Calu3 (cell line): ENCODE measurements at regions of chrX and their contacts with region 1.

Region 1: DNA sequence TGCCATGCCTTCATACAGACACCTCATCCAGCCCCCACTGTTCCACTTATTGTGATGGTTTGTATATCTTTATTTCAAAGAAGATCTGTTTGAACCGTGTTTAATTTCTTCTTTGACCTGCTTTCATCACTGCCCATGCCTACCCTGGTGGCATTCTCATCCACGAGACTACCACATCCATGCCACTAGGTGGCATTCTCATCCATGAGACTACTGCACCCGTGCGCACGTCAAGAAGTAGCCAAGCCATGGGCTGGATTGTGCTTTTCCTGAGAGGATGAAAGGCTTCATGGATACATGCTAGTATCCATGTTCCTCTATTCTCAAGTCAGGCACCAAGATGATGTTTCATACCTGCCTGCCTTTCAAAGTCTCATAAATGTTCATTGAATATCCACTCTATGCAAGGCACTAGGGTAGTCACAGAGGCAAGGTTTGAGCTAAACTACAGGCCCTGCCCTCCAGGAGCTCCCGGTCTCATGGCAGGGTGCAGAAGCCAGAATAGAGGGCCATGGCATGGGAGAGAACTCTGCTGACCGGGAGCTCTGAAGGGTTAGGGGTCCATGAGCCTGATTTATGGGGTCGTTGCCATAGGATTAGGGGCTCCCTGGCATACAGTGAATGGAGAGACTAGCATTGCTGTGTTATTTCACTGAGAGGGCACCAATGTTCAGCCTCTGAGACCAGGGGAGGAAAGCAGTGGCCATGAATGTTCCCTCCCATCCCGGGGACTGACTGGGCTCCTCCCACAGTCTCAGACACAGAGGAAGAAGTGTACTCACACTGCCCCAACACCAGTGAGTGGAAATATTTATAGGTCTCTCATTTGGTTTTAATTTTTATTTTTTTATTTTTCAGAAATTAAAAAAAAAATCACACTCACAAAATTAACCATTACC is 24.8 kb upstream of the EOLA2 start:
- DNase-seq: peak; percentile 55
- H3K4me3 Mint-ChIP-seq: no peak overlapping the region
- H3K27ac Mint-ChIP-seq: peak overlapping the region; percentile 40
- H3K4me1 Mint-ChIP-seq: peaks cover 9% of the 10 kb centered on the region
- H3K27me3 Mint-ChIP-seq: no peaks in the 10 kb centered on the region
- CTCF ChIP-seq: peak; percentile 74

Region 2: GRCh38 chrX:150049647-150050046 is 86.5 kb after region 1 on chrX:
- CTCF ChIA-PET with region 1: interaction called, 6 read pairs
- intact Hi-C with region 1: loop called (anchors 1 kb)
- DNase-seq: no peak
- H3K4me3 Mint-ChIP-seq: no peak overlapping the region
- H3K27ac Mint-ChIP-seq: no peak overlapping the region
- H3K4me1 Mint-ChIP-seq: peaks cover 26% of the 10 kb centered on the region
- H3K27me3 Mint-ChIP-seq: no peaks in the 10 kb centered on the region
- CTCF ChIP-seq: no peak

Region 3: DNA sequence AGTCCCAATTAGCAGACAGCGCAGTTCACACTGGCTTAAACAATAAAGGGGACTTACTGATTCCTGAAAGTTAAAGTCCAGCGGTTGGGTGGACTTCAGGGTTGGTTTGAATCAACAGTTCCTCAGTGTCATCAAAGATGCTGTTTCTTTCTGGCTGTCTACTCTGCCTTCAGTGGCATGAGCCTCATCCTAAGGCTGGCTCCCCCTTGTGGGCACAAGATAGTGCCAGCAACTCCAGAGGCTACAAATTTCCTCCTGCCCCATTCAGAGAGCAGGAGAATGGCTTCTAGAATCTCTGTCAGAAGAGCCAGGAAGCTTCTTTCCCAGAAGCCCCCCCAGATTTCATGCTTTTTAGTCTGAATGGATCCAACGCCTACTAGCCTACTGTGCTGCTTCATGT is 522.9 kb after region 1 on chrX:
- CTCF ChIA-PET with region 1: no interaction called
- intact Hi-C with region 1: loop called (anchors 2 kb)
- DNase-seq: peak; percentile 64
- H3K4me3 Mint-ChIP-seq: no peak overlapping the region
- H3K27ac Mint-ChIP-seq: no peak overlapping the region
- H3K4me1 Mint-ChIP-seq: peaks cover 13% of the 10 kb centered on the region
- H3K27me3 Mint-ChIP-seq: no peaks in the 10 kb centered on the region
- CTCF ChIP-seq: peak; percentile 50

Region 4: DNA sequence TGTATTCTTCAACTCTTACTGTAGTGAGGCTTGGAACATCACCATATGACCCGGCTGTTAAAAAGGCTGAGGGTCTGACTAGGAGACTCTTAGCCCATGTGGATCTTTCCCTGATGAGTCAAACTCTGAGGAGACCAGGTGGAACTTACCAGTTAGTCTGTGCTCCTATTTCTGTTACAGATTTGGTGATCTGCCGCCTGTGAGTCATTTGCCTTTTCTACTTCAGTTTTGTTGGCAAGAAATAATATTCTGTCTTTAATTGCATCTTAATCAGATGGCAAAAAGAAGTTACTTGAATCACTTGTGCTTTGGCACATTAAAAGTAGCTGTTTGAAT is 653.7 kb after region 1 on chrX:
- CTCF ChIA-PET with region 1: no interaction called
- intact Hi-C with region 1: no loop called
- DNase-seq: no peak
- H3K4me3 Mint-ChIP-seq: no peak overlapping the region
- H3K27ac Mint-ChIP-seq: no peak overlapping the region
- H3K4me1 Mint-ChIP-seq: no peaks in the 10 kb centered on the region
- H3K27me3 Mint-ChIP-seq: no peaks in the 10 kb centered on the region
- CTCF ChIP-seq: no peak

Region 5: DNA sequence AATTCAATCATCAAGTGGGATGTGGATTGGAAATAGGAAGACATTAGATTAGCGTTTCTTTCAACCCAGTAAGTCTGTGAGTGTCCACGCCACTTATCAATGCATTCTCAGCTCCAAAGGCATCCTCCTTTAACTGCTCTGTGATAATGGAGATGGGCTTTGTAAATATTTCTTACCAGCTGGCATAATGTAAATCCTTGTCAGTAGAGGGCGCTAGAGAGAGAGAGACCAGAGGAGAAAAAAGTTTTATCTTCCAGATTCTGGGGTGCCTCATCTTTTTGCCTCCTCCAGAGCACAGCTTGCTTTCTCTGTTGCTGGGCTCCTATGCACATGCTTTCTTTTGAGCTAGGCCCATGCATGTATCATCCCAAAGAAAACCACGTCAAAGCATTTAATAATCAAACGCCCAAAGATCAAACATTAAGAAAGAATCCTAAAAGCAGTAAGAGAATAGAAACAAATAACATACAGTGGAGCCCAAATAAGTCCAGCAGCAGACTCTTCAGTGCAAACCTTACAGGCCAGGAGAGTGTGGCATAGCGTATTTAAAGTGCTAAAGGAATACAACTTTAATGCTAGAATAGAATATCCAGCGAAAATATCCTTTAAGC is 720.5 kb after region 1 on chrX:
- CTCF ChIA-PET with region 1: no interaction called
- intact Hi-C with region 1: loop called (anchors 5 kb)
- DNase-seq: peak; percentile 32
- H3K4me3 Mint-ChIP-seq: no peak overlapping the region
- H3K27ac Mint-ChIP-seq: no peak overlapping the region
- H3K4me1 Mint-ChIP-seq: peaks cover 8% of the 10 kb centered on the region
- H3K27me3 Mint-ChIP-seq: no peaks in the 10 kb centered on the region
- CTCF ChIP-seq: no peak